Ovary (tissue), 10 donors: ENCODE measurements at regions of chr7 and their contacts with region 1.

Region 1: DNA sequence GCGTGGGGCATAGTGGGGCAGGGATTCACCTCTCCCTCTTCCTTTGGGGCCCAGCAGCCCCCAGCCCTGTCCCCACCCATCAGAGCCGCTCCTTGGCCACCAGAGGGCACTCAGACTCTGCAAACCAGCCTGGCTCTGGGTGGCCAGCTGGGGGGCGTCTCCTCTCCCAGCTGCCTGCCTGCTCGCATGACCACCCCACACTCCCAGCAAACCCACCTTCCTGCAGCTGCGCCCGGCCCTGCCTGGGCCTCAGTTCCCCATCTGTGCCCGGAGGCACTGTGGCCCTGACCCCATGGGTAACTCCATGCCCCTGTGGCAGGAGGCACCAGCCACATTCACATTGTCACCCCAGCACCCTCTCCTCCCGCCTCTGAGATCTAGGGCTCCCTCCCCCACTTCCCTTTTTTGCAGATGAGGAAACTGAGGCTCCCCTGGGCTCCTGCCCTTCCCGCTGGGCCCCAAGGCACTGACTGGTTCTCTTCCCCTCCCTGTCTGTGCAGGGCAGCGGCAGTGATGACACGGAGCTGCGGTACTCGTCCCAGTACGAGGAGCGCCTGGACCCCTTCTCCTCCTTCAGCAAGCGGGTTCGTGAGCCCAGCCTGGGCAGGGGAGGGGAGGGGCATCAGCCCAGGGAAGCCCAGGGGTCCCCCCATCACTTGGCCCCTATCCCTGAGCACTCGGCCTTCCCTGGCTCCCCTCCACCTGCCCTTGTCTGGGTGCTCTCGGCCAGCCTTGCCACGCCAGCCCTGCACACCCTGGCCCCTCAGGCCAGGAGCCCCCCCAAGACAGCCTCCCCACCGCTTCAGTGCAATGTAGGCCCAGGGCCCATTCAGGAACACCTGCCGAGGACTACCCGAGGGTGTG is 6.9 kb upstream of the SH2B2 start:
- DNase-seq: peak; percentile 54 to 69 (median 65)
- H3K4me3 ChIP-seq: no peak overlapping the region
- H3K27ac ChIP-seq: no peak overlapping the region
- H3K4me1 ChIP-seq: no peaks in the 10 kb centered on the region
- H3K27me3 ChIP-seq: no peaks in the 10 kb centered on the region
- CTCF ChIP-seq: peak; percentile 69 to 75 (median 70)
- EP300 ChIP-seq: no peak
- POLR2A ChIP-seq: no peak

Region 2: GRCh38 chr7:101602484-101603241 is 677.1 kb before region 1 on chr7:
- intact Hi-C with region 1: loop called in 2 of 4 experiments (anchors 5 to 10 kb)
- DNase-seq: peak; percentile 57 to 83 (median 72)
- H3K4me3 ChIP-seq: no peak overlapping the region
- H3K27ac ChIP-seq: no peak overlapping the region
- H3K4me1 ChIP-seq: no peaks in the 10 kb centered on the region
- H3K27me3 ChIP-seq: no peaks in the 10 kb centered on the region
- CTCF ChIP-seq: peak; percentile 48 to 56 (median 53)
- EP300 ChIP-seq: no peak
- POLR2A ChIP-seq: no peak

Region 3: DNA sequence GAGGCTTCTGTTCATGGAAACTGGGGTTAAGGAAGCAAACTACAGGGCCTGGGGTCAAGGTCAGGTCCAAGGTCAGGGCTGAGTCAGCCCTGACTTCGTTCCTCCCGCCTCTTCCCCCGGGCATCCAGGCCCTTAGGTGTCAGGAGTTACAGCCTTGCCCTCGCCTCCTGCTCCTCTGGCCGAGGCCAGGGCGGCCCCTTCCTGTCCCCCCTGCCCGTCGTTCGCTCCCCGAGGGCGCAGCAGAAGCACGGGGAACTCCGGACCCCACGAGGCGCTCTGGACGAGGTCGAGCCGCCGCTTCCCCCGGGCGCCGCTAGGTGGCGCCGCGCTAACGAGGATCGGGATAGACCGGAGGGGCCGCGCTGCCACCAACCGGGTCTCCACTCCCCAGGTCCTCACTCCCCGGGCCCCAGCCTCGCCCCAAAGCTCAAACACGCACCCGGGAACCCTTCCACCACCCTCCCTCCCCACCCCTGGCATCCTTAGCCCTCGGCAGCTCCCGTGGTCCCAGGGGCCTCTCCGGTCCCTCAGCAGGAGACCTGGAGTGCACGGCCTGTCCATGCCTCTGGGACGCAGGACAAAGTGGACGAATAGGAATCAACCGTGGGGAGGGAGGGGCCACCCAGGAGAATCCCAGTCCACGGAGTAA is 591.5 kb before region 1 on chr7:
- intact Hi-C with region 1: loop called in 1 of 4 experiments (anchors 10 kb)
- DNase-seq: peak; percentile 72 to 91 (median 86)
- H3K4me3 ChIP-seq: peak overlapping the region; percentile 24
- H3K27ac ChIP-seq: no peak overlapping the region
- H3K4me1 ChIP-seq: peaks cover 6% of the 10 kb centered on the region
- H3K27me3 ChIP-seq: no peaks in the 10 kb centered on the region
- CTCF ChIP-seq: peak; percentile 94 to 96 (median 95)
- EP300 ChIP-seq: no peak
- POLR2A ChIP-seq: no peak

Region 4: DNA sequence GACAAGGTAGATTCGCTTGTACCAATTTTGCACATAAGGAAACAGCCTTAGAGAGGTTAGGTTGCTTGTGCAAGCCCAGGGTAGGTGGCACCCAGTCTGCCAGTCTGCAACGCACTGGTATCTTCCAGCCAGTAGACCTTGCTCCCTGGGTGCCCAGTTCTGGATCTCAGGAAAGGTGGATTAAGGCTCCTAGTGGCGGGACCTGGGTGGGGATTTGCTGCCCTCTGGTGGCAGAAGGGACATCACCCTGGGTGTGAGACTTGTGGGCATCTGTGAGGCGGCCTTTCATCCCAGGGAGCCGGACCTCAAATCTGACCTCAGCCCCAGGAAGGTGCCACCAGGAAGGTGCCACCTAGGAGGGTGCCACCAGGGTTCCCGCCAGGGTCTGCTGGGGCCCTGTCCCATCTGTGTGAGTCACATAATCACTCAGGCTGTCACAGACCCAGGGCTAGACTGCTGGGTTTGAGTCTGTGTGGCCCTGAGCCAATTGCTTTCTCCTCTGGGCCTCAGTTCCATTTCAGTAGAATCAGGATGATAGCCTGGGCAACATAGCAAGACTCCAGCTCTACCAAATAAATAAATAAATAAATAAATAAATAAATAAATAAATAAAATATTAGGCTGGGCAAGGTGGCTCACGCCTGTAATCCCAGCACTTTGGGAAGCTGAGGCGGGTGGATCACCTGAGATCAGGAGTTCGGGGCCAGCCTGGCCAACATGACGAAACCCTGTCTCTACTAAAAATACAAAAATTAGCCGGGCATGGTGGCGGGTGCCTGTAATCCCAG is 111.1 kb after region 1 on chr7:
- intact Hi-C with region 1: loop called (anchors 5 kb)
- DNase-seq: peak; percentile 70 to 86 (median 81)
- H3K4me3 ChIP-seq: no peak overlapping the region
- H3K27ac ChIP-seq: no peak overlapping the region
- H3K4me1 ChIP-seq: no peaks in the 10 kb centered on the region
- H3K27me3 ChIP-seq: no peaks in the 10 kb centered on the region
- CTCF ChIP-seq: peak; percentile 60 to 87 (median 85)
- EP300 ChIP-seq: no peak
- POLR2A ChIP-seq: no peak